Aorta (tissue), 5 donors: ENCODE measurements at regions of chr7 and their contacts with region 1.

Region 1: DNA sequence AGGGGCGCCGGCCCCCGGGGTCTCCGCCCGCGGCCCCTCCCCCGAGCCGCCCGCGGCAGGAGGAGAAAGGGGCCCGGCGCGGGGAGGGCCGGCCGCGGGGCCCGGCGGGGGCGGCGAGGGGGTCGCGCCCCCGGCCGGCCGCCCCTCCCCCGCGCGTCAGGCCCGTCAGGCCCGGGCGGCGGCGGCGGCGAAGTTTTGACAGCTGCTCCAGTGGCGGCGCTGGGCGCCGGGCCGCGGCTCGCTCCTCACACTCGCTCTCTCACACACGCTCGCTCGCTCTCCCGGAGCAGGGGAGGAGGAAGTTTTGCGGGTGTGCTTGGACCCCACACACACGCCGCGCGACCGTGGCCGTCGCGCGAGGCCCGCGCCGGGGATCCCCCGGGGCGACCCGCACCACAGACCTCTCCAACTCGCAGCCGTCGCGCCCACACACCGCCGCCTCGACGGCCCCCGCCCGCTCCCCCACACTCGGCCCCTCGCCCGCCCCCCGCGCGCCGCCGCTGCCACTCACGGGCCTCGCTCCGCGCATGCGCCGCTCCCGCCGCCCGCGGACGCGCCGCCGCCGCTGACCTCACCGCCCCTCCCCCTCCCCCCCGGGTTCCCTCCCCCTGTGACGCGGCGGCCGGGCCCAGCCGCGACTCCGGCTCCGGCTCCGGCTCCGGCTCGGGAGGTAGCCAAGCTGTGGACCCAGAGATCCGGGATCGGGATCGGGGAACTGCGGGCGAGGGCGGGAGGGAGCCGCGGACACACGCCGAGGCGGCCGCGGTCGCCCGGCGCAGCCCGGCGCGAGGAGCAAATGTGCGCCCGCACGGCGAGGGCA is 518 bp upstream of the KMT2C start:
- DNase-seq: peak; percentile 95 to 96
- ATAC-seq: peak; percentile 97
- H3K4me3 ChIP-seq: peak overlapping the region; percentile 99 to 100
- H3K27ac ChIP-seq: peak overlapping the region; percentile 96 to 100
- H3K4me1 ChIP-seq: peaks cover 0 to 2% of the 10 kb centered on the region in 2 donors
- H3K27me3 ChIP-seq: no peaks in the 10 kb centered on the region

Region 2: GRCh38 chr7:152341039-152341913 is 95.0 kb before region 1 on chr7:
- intact Hi-C with region 1: loop called in 1 of 2 experiments (anchors 10 kb)
- DNase-seq: no peak
- ATAC-seq: peak; percentile 66
- H3K4me3 ChIP-seq: no peak overlapping the region
- H3K27ac ChIP-seq: no peak overlapping the region
- H3K4me1 ChIP-seq: peaks cover 1 to 3% of the 10 kb centered on the region in 2 donors
- H3K27me3 ChIP-seq: no peaks in the 10 kb centered on the region

Region 3: DNA sequence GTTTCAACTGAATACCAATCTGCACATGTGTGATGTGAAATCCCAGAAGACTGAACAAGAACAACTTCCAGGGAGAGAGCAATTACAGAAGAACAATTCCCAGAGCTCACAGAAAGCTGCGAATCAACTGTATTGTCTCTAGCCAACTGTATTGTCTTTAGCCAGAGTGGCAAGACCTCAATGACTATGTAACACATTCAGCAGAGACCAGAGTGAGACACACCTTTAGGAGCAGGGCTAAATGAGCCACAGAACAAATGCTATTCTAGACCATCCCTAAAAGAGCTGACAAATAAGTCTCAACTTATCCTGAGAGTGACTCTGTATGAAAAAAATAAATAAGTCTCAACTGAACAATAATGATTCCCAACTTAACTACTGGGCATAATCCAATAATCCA is 72.5 kb before region 1 on chr7:
- intact Hi-C with region 1: no loop called
- DNase-seq: no peak
- ATAC-seq: no peak
- H3K4me3 ChIP-seq: no peak overlapping the region
- H3K27ac ChIP-seq: no peak overlapping the region
- H3K4me1 ChIP-seq: peaks cover 0 to 3% of the 10 kb centered on the region in 2 donors
- H3K27me3 ChIP-seq: no peaks in the 10 kb centered on the region

Region 4: GRCh38 chr7:152463709-152464311 is 27.5 kb after region 1 on chr7:
- intact Hi-C with region 1: loop called in 1 of 2 experiments (anchors 2 kb)
- DNase-seq: peak; percentile 100
- ATAC-seq: peak; percentile 99
- H3K4me3 ChIP-seq: peak overlapping the region; percentile 75 to 77
- H3K27ac ChIP-seq: peak overlapping the region; percentile 43 to 59
- H3K4me1 ChIP-seq: no peaks in the 10 kb centered on the region
- H3K27me3 ChIP-seq: no peaks in the 10 kb centered on the region